ENCODE measurements at regions of chr20 and their contacts with region 1.

Region 1: DNA sequence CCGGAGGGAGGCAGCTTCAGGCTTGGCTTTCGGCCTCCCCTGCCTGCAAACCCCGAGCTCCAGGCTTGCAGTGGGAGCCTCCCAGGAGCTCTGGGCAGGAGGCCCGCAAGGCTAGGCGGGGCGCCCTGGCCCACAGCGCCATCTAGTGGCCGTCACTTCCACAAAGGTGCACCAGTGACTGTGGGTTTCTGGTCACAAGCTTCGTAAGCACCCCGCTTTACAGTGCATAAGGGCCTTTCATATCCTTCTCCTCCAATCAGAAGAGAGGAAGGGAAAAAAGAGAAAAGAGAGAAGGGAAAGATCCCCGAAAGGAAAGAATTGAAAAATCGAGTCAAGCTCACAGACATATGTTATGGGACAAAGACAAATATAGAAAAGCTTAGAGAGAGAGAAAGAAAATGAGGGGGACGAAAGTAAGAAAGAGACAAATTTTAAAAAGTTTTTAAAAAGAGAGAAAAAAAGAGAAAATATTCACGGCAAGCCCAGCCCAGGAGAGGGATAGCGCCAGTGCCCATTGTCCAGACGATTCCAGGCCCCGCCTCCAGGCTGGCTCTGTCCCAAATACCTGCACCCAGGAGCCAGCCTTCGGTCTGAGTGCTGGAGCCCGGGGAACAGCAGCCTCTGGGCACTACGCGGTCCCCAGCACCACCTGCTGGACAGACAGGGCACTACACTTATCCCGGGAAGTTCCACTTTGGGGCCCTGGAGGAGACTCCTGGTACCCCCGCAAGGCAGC is 207.1 kb downstream of the PREX1 start:
- DNase-seq: peak; percentile 92
- H3K4me3 Mint-ChIP-seq: peak overlapping the region; percentile 70
- H3K27ac Mint-ChIP-seq: peak overlapping the region; percentile 64
- H3K4me1 Mint-ChIP-seq: peaks cover 6% of the 10 kb centered on the region
- H3K27me3 Mint-ChIP-seq: no peaks in the 10 kb centered on the region

Region 2: DNA sequence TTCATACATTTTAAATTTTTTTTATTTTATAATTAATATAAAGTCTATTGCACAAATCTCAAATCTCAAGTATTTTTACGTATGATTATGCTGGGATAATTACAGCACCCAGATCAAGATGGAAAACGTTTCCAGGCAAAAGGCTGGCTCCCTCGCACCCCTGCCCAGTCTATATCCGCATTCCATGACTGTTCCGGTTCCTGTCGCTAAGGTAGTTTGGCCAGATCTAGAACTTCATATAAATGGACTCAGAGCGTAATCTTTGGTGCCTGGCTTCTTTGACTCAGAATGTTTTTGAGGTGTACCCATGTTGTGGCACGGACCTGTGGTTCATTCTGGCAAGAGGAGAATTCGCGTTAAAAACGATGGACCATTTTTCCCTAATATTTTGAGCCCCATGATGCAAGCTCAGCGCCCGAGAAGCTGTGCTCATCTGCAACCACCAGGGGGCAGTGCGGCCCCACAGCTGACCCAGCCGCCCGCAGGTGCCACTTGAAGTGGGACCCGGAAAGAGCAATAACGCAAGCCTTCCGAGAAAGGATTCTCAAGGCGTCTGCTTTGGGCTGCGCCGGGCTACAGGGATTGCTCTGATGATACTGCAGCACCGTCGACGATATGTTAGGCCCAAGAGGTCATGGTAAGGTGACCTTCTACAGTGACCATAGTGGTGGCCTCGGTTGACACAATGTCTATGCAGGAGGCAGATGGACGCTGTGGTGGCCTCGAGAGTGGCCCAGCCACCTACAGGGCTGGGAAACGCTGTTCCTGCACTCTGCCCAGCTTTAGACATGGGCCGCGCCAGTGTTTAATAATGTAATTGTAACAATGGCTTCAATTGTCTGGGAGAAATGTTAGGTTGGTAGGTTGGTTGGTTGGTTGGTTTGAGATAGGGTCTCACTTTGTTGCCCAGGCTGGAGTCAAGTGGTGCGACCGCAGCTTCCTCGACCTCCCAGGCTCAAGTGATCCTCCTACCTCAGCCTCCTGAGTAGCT is 1424.3 kb before region 1 on chr20:
- intact Hi-C with region 1: loop called (anchors 2 kb)
- DNase-seq: peak; percentile 93
- H3K4me3 Mint-ChIP-seq: peak overlapping the region; percentile 7
- H3K27ac Mint-ChIP-seq: peak overlapping the region; percentile 65
- H3K4me1 Mint-ChIP-seq: peaks cover 8% of the 10 kb centered on the region
- H3K27me3 Mint-ChIP-seq: peaks cover 5% of the 10 kb centered on the region

Region 3: GRCh38 chr20:47677635-47678453 is 942.8 kb before region 1 on chr20:
- intact Hi-C with region 1: loop called (anchors 1 kb)
- DNase-seq: peak; percentile 86
- H3K4me3 Mint-ChIP-seq: no peak overlapping the region
- H3K27ac Mint-ChIP-seq: no peak overlapping the region
- H3K4me1 Mint-ChIP-seq: no peaks in the 10 kb centered on the region
- H3K27me3 Mint-ChIP-seq: no peaks in the 10 kb centered on the region

Region 4: GRCh38 chr20:47725248-47725973 is 895.3 kb before region 1 on chr20:
- intact Hi-C with region 1: loop called (anchors 1 kb)
- DNase-seq: peak; percentile 96
- H3K4me3 Mint-ChIP-seq: no peak overlapping the region
- H3K27ac Mint-ChIP-seq: peak overlapping the region; percentile 26
- H3K4me1 Mint-ChIP-seq: peaks cover 46% of the 10 kb centered on the region
- H3K27me3 Mint-ChIP-seq: no peaks in the 10 kb centered on the region

Region 5: DNA sequence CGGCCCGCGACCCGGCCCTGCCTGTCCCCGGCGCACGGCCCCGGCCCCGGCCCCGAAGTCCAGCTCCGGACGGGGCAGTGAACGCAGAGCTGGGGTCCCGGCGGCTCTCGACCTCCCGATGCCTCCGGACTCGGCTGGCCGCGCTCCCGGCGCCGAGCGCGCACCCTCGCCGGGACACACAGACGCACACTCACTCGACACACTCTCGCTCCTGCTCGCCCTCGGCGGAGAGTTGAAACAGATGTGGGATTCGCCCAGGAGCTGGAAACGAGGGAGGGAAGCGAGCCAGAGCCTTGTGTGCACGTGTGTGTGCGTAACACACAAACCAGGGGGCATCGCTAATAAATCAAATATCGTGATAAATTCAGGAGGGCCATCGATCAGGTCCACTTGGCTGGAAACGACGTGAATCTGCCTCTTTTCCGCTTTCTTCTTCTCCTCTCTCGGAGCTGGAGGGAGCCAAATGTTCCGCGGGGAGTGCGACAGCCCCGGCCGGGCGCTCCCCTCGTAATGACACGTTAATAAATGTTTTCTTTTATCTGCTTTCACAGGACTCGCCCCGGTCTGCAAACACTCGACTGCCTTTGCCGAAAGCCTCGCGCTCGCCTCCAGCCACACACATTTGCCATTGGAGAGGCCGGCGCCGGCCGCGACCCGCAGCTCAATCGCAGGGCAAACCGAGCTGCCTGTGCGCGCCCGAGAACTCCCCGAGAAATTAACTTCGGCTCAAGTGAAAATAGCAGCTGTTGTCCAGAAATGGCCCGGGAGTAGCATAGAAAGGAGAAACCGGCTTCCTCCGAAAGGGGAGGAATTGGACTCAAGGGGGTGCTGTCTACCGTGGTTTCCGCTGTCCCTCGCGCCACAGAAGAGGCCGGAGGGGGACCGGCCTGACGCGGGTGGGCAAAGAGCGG is 834.6 kb before region 1 on chr20:
- intact Hi-C with region 1: loop called (anchors 2 kb)
- DNase-seq: peak; percentile 62
- H3K4me3 Mint-ChIP-seq: peak overlapping the region; percentile 77
- H3K27ac Mint-ChIP-seq: no peak overlapping the region
- H3K4me1 Mint-ChIP-seq: peaks cover 9% of the 10 kb centered on the region
- H3K27me3 Mint-ChIP-seq: peaks cover 67% of the 10 kb centered on the region